Activated CD4-positive, alpha-beta memory T cell treated with anti-CD3 and anti-CD28 coated beads for 36 hours (primary cell): ENCODE measurements at regions of chr5 and their contacts with region 1.

Region 1: DNA sequence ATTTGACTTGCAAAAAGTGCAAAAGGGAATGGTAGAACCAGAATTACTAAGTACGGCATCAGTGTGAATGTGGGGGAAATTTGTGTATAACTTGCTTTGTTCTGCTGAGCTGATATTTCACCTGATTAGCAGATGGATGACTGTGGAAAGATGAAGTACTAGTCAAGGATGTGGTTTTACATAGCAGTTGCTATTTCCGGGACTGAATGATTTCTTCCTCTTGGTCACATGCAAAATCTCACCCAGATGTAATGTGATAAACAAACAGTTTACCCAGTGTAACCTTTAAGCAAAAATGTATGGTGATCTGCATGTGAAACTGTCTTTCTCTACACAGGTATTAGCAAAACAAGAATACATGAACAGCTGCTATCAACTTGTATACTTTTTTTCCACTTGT is 46.1 kb downstream of the DCP2 start:
- DNase-seq: no peak
- H3K4me3 Mint-ChIP-seq: no peak overlapping the region
- H3K27ac Mint-ChIP-seq: peak overlapping the region; percentile 77
- H3K4me1 Mint-ChIP-seq: peaks cover 68% of the 10 kb centered on the region
- H3K27me3 Mint-ChIP-seq: no peaks in the 10 kb centered on the region

Region 2: DNA sequence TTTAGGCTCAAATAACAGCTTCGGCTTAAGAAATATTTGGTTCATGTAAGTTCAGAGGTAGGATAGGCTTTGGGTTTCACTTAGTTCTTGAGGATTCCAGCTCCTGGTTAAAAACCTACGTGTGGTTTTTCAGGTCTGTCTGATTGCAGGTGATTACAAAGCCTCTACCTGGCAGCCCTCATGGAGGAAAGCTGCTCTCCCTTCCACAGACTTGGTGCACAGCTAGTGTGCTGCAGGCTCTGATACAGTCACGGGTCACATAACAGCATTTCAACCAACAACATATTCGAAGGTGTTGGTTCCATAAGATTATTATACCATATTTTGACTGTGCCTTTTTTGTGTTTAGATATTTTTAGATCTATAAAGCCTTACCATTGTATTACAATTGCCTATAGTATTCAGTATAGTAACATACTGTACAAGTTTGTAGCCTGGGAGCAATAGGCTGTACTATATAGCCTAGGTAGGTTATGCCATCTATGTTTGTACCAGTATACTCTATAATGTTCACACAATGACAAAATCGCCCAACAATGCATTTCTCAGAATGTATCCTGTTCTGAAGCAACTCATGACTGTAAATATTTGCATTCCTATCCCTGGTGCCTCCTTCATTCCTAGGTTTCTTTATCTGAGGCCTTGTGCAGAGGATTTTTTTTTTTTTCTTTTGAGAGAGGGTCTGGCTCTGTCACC is 54.1 kb before region 1 on chr5:
- CTCF ChIA-PET with region 1: no interaction called
- POLR2A ChIA-PET with region 1: no interaction called
- intact Hi-C with region 1: loop called (anchors 1 kb)
- DNase-seq: no peak
- H3K4me3 Mint-ChIP-seq: no peak overlapping the region
- H3K27ac Mint-ChIP-seq: no peak overlapping the region
- H3K4me1 Mint-ChIP-seq: peaks cover 45% of the 10 kb centered on the region
- H3K27me3 Mint-ChIP-seq: no peaks in the 10 kb centered on the region

Region 3: GRCh38 chr5:113005454-113005853 is 17.2 kb before region 1 on chr5:
- CTCF ChIA-PET with region 1: no interaction called
- POLR2A ChIA-PET with region 1: no interaction called
- intact Hi-C with region 1: loop called (anchors 1 kb)
- DNase-seq: no peak
- H3K4me3 Mint-ChIP-seq: no peak overlapping the region
- H3K27ac Mint-ChIP-seq: peak overlapping the region; percentile 18
- H3K4me1 Mint-ChIP-seq: peaks cover 9% of the 10 kb centered on the region
- H3K27me3 Mint-ChIP-seq: no peaks in the 10 kb centered on the region

Region 4: DNA sequence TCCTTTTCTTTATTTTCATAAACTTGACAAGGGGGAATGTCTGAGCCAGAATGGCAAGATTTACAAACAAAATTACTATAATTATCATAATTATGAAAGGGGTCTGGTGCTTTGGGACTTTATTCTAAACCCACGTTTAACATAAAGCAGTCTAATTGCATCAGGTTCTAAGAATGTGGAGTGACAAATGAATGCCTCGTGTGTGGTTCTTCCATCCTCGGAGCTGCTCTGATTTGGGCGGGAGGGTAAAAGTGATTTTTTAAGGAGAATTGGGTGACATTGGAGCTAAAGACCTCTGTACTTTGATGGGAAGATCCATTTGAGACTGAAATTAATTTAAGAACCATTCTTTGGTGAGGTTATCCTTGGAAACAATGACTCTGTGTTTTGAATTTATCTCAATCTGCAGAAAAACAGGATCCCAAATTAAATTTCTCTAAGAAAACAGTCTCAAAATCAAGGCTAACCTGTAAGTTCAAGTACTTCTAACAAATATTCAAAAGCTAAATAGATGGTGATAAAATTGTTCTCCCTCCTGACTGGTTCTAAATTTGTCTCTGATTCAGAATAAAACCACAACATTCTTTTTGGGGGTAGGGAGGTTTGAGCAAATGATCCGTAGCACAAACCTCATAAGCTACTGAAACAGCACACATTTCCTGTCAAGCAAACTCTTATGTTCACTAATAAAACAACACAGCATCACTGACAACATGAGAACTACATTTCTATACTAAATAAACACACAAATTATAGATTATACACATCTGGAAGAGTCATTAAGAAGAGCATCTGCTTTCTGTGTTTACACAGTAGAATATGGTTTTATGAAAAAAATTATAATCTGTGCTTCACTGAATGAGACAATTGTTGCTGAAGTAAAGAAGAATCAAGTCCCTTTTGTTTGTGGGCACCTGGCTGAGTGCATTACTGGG is 39.5 kb after region 1 on chr5:
- CTCF ChIA-PET with region 1: no interaction called
- POLR2A ChIA-PET with region 1: no interaction called
- intact Hi-C with region 1: loop called (anchors 2 kb)
- DNase-seq: no peak
- H3K4me3 Mint-ChIP-seq: no peak overlapping the region
- H3K27ac Mint-ChIP-seq: no peak overlapping the region
- H3K4me1 Mint-ChIP-seq: peaks cover 23% of the 10 kb centered on the region
- H3K27me3 Mint-ChIP-seq: no peaks in the 10 kb centered on the region

Region 5: DNA sequence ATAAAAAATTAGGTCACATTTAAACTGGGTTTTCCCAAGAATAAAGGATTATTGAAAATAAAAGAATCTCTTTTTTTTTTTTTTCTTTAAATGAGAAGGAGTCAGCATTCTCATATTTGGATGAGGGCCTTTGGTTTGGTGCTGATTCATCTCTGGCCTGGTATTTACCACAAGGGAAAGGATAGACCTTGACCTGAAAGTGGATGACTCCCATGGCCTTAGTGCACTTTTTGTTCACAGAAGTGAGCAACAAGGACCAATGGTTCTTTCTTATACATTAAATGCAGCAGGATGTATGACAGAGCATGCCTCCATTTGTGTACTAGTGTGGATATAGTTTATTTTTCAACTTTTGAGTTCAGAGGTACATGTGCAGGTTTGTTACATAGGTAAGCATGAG is 497.8 kb after region 1 on chr5:
- CTCF ChIA-PET with region 1: no interaction called
- POLR2A ChIA-PET with region 1: no interaction called
- intact Hi-C with region 1: loop called (anchors 5 kb)
- DNase-seq: peak; percentile 59
- H3K4me3 Mint-ChIP-seq: no peak overlapping the region
- H3K27ac Mint-ChIP-seq: peak overlapping the region; percentile 3
- H3K4me1 Mint-ChIP-seq: peaks cover 54% of the 10 kb centered on the region
- H3K27me3 Mint-ChIP-seq: no peaks in the 10 kb centered on the region